ENCODE measurements at regions of chr12 and their contacts with region 1.

Region 1: GRCh38 chr12:52879394-52880351 is 25.2 kb downstream of the KRT8 start:
- DNase-seq: peak; percentile 85 to 88
- ATAC-seq: peak; percentile 90
- H3K4me3 ChIP-seq: no peak overlapping the region
- H3K27ac ChIP-seq: no peak overlapping the region
- H3K4me1 ChIP-seq: no peaks in the 10 kb centered on the region
- H3K27me3 ChIP-seq: no peaks in the 10 kb centered on the region

Region 2: GRCh38 chr12:52147367-52147972 is 732.2 kb before region 1 on chr12:
- intact Hi-C with region 1: loop called (anchors 2 to 5 kb)
- DNase-seq: peak; percentile 96 to 98
- ATAC-seq: peak; percentile 88
- H3K4me3 ChIP-seq: no peak overlapping the region
- H3K27ac ChIP-seq: peak overlapping the region in 1 of 2 donors; percentile 64
- H3K4me1 ChIP-seq: peaks cover 0 to 2% of the 10 kb centered on the region in 2 donors
- H3K27me3 ChIP-seq: no peaks in the 10 kb centered on the region

Region 3: DNA sequence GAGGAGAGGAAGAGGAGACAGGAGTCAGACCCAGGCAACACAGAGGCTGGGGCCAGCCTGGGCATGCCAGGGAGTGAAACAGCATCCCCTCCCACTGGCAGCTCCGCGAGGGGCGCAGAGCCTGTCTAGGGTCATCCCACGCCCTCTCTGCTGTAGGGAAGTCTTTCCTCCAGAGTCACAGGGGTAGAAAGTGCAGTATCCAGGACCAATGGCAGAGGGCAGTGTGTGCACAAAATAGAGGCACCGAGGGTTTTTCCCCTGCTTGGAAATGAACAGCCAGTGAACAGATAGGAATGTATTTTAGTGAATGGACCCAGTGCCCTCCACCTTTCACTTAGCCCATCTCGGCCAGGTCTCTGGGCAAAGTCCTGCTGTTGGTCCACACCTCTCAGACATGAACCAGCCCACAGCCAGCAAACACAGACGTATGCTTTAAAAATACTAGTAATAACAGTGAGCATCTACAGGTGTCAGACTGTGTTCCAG is 296.7 kb before region 1 on chr12:
- intact Hi-C with region 1: loop called (anchors 2 to 5 kb)
- DNase-seq: no peak
- ATAC-seq: peak; percentile 64
- H3K4me3 ChIP-seq: no peak overlapping the region
- H3K27ac ChIP-seq: no peak overlapping the region
- H3K4me1 ChIP-seq: no peaks in the 10 kb centered on the region
- H3K27me3 ChIP-seq: no peaks in the 10 kb centered on the region

Measured in aorta (tissue), 5 donors.